Caco-2 (cell line): ENCODE measurements at regions of chr9 and their contacts with region 1.

Region 1: DNA sequence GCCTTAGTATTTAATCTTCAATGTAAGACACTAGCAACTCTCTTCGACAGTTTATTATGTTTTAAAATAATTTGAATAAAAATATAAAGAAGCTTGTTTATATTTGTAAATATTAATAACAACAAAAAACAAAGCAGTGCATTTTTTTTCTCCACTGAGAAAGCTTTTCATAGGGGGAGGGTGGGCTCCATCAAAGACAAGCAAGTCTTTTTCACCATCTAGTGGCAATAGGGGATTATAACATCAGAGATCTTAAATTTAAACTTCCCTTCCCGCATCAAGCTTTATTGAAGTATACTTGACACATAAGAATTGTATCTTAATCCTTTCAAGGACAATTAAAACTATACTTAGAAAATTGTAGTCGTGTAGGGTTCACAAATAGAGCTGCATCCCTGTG is 9.3 kb upstream of the OR13F1 start:
- DNase-seq: no peak
- H3K4me3 ChIP-seq: no peak overlapping the region
- H3K4me3 Mint-ChIP-seq: no peak overlapping the region
- H3K27ac Mint-ChIP-seq: no peak overlapping the region
- H3K4me1 ChIP-seq: no peaks in the 10 kb centered on the region
- H3K4me1 Mint-ChIP-seq: no peaks in the 10 kb centered on the region
- H3K27me3 ChIP-seq: no peaks in the 10 kb centered on the region
- H3K27me3 Mint-ChIP-seq: no peaks in the 10 kb centered on the region
- CTCF ChIP-seq: no peak

Region 2: DNA sequence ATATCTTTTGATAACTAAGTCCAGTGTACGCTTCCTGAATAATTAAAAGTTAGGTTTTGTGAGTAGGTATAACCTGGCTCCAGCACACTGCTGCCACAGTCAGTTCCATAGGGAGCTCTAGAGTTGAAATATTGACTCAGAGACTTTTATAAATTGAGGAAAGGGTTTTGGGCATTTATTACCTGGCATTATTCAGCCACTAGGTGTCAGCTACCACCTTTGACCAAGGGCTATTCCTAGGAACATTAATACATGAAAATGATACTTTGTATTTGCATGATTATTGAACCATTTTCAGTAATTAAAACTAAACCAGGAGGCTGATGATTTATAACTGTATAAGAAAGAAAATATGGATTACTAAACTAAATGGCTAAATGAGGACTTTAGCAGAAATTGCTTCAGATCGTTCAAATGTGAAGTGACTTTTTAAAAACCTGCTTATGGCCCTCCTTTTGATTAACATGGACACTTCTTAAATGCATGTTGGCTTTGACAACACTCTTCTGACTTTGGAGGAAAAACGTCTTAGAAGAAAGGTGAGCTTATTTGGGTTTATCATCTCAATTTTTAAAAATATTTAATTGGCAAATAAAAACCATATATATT is 317.7 kb before region 1 on chr9:
- CTCF ChIA-PET with region 1: interaction called, 7 read pairs
- POLR2A ChIA-PET with region 1: no interaction called
- intact Hi-C with region 1: loop called (anchors 10 kb)
- DNase-seq: peak in 1 of 2 experiments; percentile 7
- H3K4me3 ChIP-seq: no peak overlapping the region
- H3K4me3 Mint-ChIP-seq: no peak overlapping the region
- H3K27ac Mint-ChIP-seq: no peak overlapping the region
- H3K4me1 ChIP-seq: no peaks in the 10 kb centered on the region
- H3K4me1 Mint-ChIP-seq: no peaks in the 10 kb centered on the region
- H3K27me3 ChIP-seq: no peaks in the 10 kb centered on the region
- H3K27me3 Mint-ChIP-seq: no peaks in the 10 kb centered on the region
- CTCF ChIP-seq: peak; percentile 34 to 36

Region 3: GRCh38 chr9:104339692-104340091 is 155.1 kb before region 1 on chr9:
- CTCF ChIA-PET with region 1: no interaction called
- POLR2A ChIA-PET with region 1: no interaction called
- intact Hi-C with region 1: loop called (anchors 10 kb)
- DNase-seq: no peak
- H3K4me3 ChIP-seq: no peak overlapping the region
- H3K4me3 Mint-ChIP-seq: no peak overlapping the region
- H3K27ac Mint-ChIP-seq: no peak overlapping the region
- H3K4me1 ChIP-seq: no peaks in the 10 kb centered on the region
- H3K4me1 Mint-ChIP-seq: no peaks in the 10 kb centered on the region
- H3K27me3 ChIP-seq: no peaks in the 10 kb centered on the region
- H3K27me3 Mint-ChIP-seq: no peaks in the 10 kb centered on the region
- CTCF ChIP-seq: no peak

Region 4: GRCh38 chr9:104895572-104895971 is 400.8 kb after region 1 on chr9:
- CTCF ChIA-PET with region 1: no interaction called
- POLR2A ChIA-PET with region 1: no interaction called
- intact Hi-C with region 1: no loop called
- DNase-seq: no peak
- H3K4me3 ChIP-seq: no peak overlapping the region
- H3K4me3 Mint-ChIP-seq: no peak overlapping the region
- H3K27ac Mint-ChIP-seq: no peak overlapping the region
- H3K4me1 ChIP-seq: peaks cover 9% of the 10 kb centered on the region; the same call in 1 of the 2 replicates
- H3K4me1 Mint-ChIP-seq: no peaks in the 10 kb centered on the region
- H3K27me3 ChIP-seq: no peaks in the 10 kb centered on the region
- H3K27me3 Mint-ChIP-seq: no peaks in the 10 kb centered on the region
- CTCF ChIP-seq: no peak